ENCODE measurements at regions of chr12 and their contacts with region 1.

Region 1: DNA sequence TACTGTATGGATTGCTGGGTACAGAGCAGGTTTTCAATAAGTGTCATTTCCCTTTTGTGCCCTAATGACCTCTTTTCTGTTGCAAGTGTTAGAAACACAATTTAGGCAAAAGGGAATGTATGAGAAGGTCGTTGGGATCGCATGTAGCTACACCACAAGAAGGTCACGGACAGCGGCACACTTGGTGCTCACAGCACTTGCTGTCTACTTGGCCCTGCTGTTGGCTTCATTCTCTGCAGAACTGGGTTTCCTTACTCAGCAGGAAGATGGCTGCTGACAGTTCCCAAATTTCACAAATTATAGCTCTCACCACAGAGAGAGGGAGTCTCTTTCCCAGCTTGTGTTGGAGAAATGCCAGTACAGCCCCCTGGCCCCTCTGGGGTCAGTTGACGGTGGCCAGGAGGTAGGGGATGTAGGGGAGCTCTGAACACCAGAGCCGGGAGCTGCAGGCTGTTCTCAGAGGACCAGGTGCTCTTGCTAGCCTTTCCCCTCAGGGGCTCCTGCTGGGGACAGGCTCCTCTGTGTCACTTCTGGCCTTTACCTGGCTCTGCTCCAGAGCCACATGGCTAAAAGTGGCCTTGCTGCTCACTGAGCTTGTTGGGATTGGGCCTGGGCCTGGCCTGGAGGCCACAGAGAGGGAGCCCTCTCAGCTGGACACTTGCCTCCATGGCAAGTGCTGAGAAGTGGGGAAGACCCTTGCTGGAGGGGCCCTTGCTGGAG is 50.9 kb upstream of the BCL7A start:
- DNase-seq: no peak
- ATAC-seq: no peak

Region 2: DNA sequence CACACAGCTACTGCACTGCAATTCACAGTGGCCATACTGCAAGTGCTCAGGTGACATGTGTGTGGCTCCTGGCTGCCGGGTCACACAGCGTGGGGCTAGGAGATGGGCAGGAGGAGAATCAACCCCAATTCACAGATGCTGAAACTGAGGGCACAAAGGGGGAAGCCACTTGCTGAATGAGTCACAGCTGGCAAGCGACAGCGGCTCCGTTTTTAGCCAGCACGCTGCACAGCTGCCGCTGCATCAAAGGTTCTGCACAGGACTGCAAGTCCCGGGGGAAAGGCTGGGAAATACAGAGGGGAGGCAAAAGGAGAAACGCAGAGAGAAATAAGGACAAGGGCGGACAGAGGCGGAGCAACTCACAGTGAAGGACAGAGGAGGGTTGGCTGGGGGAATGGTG is 447.8 kb before region 1 on chr12:
- intact Hi-C with region 1: no loop called
- DNase-seq: no peak
- ATAC-seq: peak; percentile 15

Region 3: GRCh38 chr12:121550974-121551634 is 419.6 kb before region 1 on chr12:
- intact Hi-C with region 1: no loop called
- DNase-seq: no peak
- ATAC-seq: no peak

Region 4: DNA sequence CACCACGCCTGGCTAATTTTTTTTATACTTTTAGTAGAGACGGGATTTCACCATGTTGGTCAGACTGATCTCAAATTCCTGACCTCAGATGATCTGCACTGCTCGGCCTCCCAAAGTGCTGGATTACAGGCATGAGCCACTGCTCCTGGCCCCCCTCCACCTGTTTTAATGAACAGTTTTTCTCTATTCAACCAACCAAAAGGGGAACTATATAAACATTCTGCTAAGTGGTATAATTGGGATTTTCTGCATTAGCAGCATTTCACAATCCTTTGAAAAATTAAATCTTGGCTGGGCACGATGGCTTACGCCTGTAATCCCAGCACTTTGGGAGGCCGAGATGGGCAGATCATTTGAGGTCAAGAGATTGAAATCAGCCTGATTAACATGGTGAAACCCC is 601.1 kb after region 1 on chr12:
- intact Hi-C with region 1: loop called (anchors 10 kb)
- DNase-seq: no peak
- ATAC-seq: no peak